ENCODE measurements at regions of chr6 and their contacts with region 1.

Region 1: DNA sequence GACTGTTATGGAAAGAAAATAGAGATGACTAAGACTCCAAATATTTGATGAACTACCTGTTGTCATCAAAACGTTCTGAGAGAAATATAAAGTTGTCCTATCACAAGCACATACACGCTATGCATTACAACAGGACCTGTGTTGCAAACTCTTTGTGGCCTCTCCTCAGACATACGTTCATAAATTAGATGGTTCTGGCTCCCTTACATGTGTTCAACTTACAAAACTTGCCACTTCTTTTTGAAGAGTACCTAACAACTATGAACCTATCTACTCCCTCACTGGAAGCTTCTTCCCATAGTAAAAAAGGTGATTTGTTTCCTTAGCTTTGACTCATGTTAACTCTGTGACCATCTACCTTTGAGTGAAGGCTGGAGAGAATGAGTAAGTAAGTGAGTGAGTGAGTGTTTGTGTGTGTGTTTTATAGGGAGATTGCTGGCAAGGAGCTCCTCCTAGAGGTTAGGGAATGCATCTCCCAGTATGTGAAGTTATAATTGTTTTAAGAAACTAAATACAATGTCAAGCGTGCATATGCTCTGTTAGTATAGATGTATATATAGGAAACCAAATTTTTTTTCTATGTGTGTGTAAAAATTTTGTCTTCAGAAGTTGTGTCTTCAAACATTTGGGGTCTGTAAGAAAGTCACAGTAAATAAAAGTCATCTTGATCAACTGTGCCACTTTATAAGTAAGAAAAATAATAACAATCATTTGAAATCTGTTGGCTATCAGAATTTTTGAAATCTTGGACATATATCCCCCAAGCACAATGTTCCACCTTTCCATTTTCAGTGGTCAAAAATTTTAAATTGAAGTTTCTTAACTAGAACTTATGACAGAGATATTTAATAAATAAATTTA is 1211.1 kb upstream of the GJE1 start:
- DNase-seq: peak; percentile 63
- H3K4me3 Mint-ChIP-seq: no peak overlapping the region
- H3K27ac Mint-ChIP-seq: no peak overlapping the region
- H3K4me1 Mint-ChIP-seq: no peaks in the 10 kb centered on the region
- H3K27me3 Mint-ChIP-seq: peaks cover 1% of the 10 kb centered on the region

Region 2: DNA sequence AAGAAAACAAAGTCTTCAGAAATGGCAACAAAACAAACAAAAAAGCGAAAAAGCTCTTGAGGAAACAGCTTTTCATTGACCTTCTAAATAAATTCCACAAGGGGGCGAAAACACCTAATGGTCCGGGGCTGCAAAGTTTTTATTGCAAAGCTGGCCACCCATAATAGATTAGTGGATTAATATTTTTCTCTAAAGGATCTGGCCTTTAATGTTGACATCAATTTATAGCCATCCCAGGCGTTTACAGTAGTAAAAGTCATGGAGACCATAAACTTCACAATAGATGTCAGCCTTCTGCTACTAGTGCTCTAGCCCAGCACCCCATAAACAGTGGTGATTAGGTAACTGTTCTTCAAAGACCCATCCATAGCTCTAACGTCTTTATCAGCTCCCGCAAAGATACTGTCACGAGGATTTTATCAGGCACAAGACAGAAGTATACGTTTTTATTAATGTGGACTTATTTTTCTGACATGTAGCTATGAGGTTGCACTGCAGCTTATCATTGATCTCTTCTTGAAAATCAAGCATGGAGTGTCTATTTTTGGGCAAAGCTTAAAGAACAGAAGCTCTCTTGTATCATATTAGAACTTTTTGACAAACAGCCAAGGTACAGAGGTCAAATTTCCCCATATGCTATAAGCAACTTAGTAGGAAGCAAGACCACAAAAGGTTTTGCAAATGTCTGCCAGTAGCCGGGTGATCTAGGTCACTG is 1551.9 kb before region 1 on chr6:
- intact Hi-C with region 1: loop called (anchors 2 kb)
- DNase-seq: peak; percentile 71
- H3K4me3 Mint-ChIP-seq: no peak overlapping the region
- H3K27ac Mint-ChIP-seq: no peak overlapping the region
- H3K4me1 Mint-ChIP-seq: peaks cover 33% of the 10 kb centered on the region
- H3K27me3 Mint-ChIP-seq: peaks cover 4% of the 10 kb centered on the region

Region 3: GRCh38 chr6:139881728-139882211 is 1039.8 kb before region 1 on chr6:
- intact Hi-C with region 1: loop called (anchors 5 kb)
- DNase-seq: peak; percentile 71
- H3K4me3 Mint-ChIP-seq: no peak overlapping the region
- H3K27ac Mint-ChIP-seq: no peak overlapping the region
- H3K4me1 Mint-ChIP-seq: peaks cover 4% of the 10 kb centered on the region
- H3K27me3 Mint-ChIP-seq: peaks cover 4% of the 10 kb centered on the region

Region 4: GRCh38 chr6:140677781-140678528 is 243.6 kb before region 1 on chr6:
- intact Hi-C with region 1: no loop called
- DNase-seq: no peak
- H3K4me3 Mint-ChIP-seq: no peak overlapping the region
- H3K27ac Mint-ChIP-seq: no peak overlapping the region
- H3K4me1 Mint-ChIP-seq: no peaks in the 10 kb centered on the region
- H3K27me3 Mint-ChIP-seq: no peaks in the 10 kb centered on the region

Region 5: DNA sequence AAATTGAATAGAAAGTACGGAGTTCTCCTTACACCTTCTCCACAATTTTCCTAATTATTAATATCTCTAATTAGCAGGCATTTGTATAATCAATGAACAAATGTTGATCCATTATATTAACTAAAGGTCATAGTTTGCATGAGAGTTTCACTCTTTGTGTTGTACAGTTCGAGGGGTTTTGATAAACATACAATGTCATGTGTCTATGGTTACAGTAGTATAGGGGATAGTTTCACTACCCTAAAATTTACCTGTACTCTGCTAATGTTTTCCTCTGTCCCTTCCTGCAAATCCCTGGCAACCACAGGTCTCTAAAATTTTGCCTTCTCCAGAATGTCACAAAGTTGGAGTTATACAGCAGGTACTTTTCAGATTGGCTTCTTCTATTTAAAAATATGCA is 11.3 kb after region 1 on chr6:
- intact Hi-C with region 1: no loop called
- DNase-seq: no peak
- H3K4me3 Mint-ChIP-seq: no peak overlapping the region
- H3K27ac Mint-ChIP-seq: no peak overlapping the region
- H3K4me1 Mint-ChIP-seq: no peaks in the 10 kb centered on the region
- H3K27me3 Mint-ChIP-seq: peaks cover 4% of the 10 kb centered on the region

Region 6: GRCh38 chr6:141488488-141488887 is 566.9 kb after region 1 on chr6:
- intact Hi-C with region 1: no loop called
- DNase-seq: no peak
- H3K4me3 Mint-ChIP-seq: no peak overlapping the region
- H3K27ac Mint-ChIP-seq: no peak overlapping the region
- H3K4me1 Mint-ChIP-seq: peaks cover 23% of the 10 kb centered on the region
- H3K27me3 Mint-ChIP-seq: no peaks in the 10 kb centered on the region